Transverse colon (tissue), 4 donors: ENCODE measurements at regions of chr3 and their contacts with region 1.

Region 1: DNA sequence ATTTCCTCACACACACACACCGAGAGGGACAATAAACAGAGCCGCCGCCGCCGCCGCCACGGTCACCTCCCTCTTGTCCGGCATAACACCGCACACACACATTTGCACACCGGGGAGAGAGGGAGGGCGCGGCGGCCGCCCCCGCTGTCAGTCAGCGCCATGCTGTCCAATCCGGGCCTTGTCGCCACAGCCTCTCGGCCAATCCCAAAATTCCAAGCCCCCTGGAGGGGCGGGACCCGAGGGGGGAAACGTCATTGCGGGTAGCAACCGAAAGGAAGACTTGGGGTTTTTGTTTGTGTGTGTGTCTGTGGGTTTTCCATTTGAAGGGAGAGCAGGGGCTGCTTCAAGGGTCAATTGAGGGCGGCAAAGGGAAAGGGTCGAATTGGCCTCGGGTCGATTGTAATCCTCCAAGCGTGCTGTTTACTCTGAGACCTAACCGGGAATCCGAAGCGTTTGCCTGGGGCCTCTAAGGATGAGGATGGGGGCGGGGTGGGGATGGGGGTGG is at the start of gene TOP2B:
- DNase-seq: peak; percentile 97
- H3K4me3 ChIP-seq: peak within 1 kb of the TSS; percentile 54 to 89 (median 78)
- H3K27ac ChIP-seq: peak within 1 kb of the TSS; percentile 92 to 99 (median 98)
- H3K4me1 ChIP-seq: peaks cover 9 to 37% (median 23%) of the 10 kb centered on the region in 4 donors
- H3K27me3 ChIP-seq: no peaks in the 10 kb centered on the region
- CTCF ChIP-seq: no peak
- EP300 ChIP-seq: no peak
- POLR2A ChIP-seq: peak; percentile 94
- total RNA-seq, gene TOP2B: 37.4 to 104 (median 71.5) TPM

Region 2: GRCh38 chr3:25558111-25558510 is 106.8 kb before region 1 on chr3:
- in situ Hi-C with region 1: no loop called
- intact Hi-C with region 1: no loop called
- DNase-seq: no peak
- H3K4me3 ChIP-seq: no peak overlapping the region
- H3K27ac ChIP-seq: no peak overlapping the region
- H3K4me1 ChIP-seq: peaks cover 0 to 4% (median 0%) of the 10 kb centered on the region in 4 donors
- H3K27me3 ChIP-seq: no peaks in the 10 kb centered on the region
- CTCF ChIP-seq: no peak
- EP300 ChIP-seq: no peak
- POLR2A ChIP-seq: no peak

Region 3: GRCh38 chr3:25789596-25790556 is 125.0 kb after region 1 on chr3 and contains the start of gene OXSM:
- in situ Hi-C with region 1: loop called in 2 of 4 experiments (anchors 10 to 25 kb)
- intact Hi-C with region 1: no loop called
- DNase-seq: peak; percentile 95
- H3K4me3 ChIP-seq: peak within 1 kb of the TSS; percentile 40 to 67 (median 52)
- H3K27ac ChIP-seq: peak within 1 kb of the TSS; percentile 84 to 90 (median 88)
- H3K4me1 ChIP-seq: peaks cover 6 to 50% (median 20%) of the 10 kb centered on the region in 4 donors
- H3K27me3 ChIP-seq: no peaks in the 10 kb centered on the region
- CTCF ChIP-seq: no peak
- EP300 ChIP-seq: peak; percentile 90
- POLR2A ChIP-seq: peak; percentile 86
- total RNA-seq, gene OXSM: 5.0 to 13.5 (median 11.2) TPM

Region 4: GRCh38 chr3:25856902-25857518 is 192.1 kb after region 1 on chr3:
- in situ Hi-C with region 1: loop called in 1 of 4 experiments (anchors 25 kb)
- intact Hi-C with region 1: no loop called
- DNase-seq: no peak
- H3K4me3 ChIP-seq: no peak overlapping the region
- H3K27ac ChIP-seq: no peak overlapping the region
- H3K4me1 ChIP-seq: peaks cover 0 to 9% (median 0%) of the 10 kb centered on the region in 4 donors
- H3K27me3 ChIP-seq: no peaks in the 10 kb centered on the region
- CTCF ChIP-seq: peak; percentile 54 to 74 (median 64)
- EP300 ChIP-seq: no peak
- POLR2A ChIP-seq: no peak